GM13976 (cell line): ENCODE measurements at regions of chr12 and their contacts with region 1.

Region 1: GRCh38 chr12:122054842-122055520 is 23.6 kb upstream of the MLXIP start:
- DNase-seq: no peak
- CTCF ChIP-seq: no peak

Region 2: GRCh38 chr12:121811434-121812319 is 243.3 kb before region 1 on chr12:
- in situ Hi-C with region 1: no loop called
- DNase-seq: peak; percentile 94
- CTCF ChIP-seq: peak; percentile 93

Region 3: DNA sequence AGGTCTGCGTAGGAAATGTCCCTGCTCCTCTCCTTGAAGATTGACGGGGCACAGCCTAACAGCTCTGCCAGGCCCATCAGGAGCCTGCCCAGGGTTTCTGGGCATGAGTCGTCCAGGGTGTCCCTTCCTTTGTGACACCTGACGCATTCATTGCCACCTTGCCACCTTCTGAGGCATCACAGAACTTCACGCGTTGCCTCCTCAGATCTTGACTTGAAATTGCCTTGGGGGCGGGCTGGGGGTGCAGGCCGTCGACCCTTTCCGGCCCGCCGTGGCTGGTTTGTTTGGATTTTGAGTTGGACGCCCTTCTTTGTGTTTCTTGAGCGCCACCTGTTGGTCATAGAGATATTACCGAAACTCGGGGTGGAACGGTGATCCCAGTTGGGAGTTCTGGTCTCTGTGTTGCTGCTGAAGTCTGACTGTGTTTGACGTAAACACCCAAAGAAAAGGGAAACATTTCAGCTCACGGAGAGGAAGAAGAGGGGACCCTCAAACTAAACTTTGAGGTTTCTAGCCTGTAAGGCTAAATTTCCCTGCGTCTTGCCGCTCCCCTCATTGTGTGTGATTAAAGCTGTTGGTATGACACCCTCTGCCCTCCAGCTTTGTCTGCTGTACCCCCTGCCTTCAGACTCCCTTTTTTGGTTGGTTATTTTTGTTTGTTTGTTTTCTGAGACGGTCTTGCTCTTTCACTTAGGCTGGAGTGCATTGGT is 68.2 kb after region 1 on chr12:
- in situ Hi-C with region 1: loop called (anchors 5 kb)
- DNase-seq: peak; percentile 85
- CTCF ChIP-seq: peak; percentile 54

Region 4: DNA sequence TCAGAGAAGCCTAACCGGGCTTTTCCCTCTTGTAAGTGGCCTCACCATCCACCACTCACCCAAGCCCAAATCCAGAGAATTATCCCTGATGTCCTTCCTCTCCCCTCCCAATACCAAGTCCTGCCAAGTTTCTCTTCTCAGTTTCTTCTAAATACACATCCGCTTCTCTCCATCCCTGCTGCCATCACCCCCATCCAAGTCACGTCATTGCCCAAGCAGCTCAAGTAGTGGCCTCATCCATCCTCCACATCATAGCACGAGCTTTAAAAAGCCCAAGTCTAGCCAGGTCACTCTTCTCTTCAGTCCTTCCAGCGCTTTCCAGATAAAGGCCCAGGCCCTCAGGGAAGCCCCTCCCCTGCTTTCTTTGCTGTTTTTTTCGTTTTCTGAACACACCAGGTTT is 93.7 kb after region 1 on chr12:
- in situ Hi-C with region 1: no loop called
- DNase-seq: no peak
- CTCF ChIP-seq: no peak